ENCODE measurements at regions of chr19 and their contacts with region 1.

Region 1: DNA sequence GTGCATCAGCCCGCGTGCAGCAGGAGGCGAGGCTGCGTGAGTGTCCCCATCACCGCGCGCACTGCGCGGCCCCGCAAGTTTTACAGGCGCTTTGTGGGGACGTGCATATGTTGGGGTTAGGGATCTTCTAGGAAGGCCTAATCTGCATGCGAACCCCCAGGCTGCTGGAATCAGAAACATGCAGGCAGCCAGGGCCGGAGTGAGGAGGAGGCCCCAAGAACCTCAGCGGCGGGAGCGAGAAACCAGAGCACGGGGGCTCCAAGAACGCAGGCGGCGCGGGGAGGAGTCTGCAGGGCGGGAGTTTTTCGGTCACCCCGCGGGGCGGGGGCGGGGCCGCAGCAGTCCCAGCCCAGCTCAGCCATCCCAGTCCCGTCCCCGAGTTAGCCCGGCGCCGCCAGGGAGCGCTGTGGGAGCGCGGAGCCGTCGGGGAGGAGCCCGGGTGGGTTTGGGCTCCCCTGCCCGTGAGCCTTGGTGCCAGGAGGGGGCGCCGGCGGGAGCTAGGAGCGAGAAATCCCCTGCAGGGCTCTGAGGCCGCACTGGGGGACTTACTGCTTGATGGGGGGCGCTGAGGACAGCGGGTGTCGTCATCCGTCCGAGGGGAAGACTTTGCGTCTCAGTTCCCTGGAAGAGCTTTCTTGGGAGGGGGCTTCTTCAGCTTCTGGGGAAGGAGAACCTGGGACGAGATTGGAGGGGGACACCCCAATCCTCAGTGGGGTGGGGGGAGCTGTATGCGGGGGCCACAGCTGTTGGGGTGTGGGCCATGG is 933 bp upstream of the NRTN start:
- DNase-seq: peak; percentile 74 to 97
- H3K4me3 ChIP-seq: no peak overlapping the region
- CTCF ChIP-seq: no peak
- POLR2A ChIP-seq: no peak

Region 2: DNA sequence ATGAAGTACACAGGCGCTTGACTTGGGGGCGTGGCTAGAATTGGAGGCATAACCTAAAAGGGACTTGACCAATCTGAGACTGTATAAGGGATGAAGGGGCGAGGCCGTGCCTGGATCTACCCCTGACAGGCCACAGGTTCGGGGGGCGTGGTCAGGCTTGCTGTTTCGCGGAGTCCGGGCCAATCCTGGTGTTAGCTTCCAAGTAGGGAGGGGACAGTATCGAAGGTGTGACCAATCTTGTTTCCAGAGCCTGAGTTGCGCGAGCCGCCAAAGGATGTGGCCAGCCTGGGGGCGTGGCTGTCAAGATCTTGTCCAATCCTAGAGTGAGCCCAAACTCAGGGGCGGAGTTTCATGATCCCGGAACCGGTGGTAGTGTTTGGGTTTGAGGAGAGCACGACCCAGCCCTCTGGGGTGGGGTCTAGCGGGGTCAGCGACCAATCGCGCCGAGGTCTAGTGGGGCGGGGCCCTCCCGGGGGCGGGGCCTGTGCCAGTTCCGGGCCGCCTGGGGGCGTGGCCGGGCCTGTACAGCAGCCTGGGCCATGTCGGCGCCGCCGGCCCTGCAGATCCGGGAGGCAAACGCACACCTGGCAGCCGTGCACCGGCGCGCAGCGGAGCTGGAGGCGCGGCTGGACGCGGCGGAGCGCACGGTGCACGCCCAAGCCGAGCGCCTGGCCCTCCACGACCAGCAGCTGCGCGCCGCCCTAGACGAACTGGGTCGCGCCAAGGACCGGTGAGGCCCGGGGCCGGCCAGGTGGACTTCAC is 100.6 kb after region 1 on chr19 and contains the start of gene VMAC:
- intact Hi-C with region 1: no loop called
- DNase-seq: peak; percentile 100
- H3K4me3 ChIP-seq: peak within 1 kb of the TSS; percentile 94
- CTCF ChIP-seq: no peak
- POLR2A ChIP-seq: no peak
- total RNA-seq, gene VMAC: 10.2 to 15.2 (median 10.8) TPM

Region 3: DNA sequence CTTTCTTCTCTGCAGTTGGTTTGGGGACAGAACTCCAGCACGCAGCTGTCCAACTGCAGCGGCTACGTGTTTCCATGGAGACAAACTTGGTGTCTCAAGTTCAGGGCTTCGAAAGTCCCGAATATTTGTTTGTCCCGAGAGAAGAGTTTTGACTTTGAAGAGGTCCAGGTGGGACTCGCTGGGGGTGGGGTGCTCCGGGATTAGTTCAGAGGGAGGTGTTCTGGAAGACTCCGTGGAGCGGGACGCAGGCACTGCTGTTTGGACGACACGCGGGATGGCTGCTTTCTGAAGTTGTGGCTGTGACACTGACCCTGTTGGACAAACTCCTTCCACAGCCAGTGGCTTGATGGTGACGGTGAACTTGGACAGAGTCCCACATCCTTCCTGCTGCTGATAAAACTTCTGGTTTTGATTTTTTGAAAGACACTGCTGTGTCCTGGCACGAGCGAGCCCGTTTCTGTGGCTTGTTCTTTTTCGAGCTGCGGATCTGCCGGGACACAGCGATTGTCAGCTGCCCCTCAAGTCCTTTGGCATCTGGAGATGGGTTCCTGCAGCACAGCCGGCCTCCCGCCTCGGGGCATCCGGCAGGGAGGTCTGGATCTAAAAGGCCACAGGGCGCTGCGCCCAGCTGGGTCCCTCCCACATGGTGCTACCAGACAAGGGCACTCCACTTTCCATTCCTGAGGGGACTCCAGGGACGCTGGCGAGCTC is 189.9 kb after region 1 on chr19:
- intact Hi-C with region 1: no loop called
- DNase-seq: peak in 1 of 2 donors; percentile 21
- H3K4me3 ChIP-seq: no peak overlapping the region
- CTCF ChIP-seq: no peak
- POLR2A ChIP-seq: no peak

Region 4: GRCh38 chr19:6021878-6022569 is 218.1 kb after region 1 on chr19:
- intact Hi-C with region 1: loop called (anchors 10 kb)
- DNase-seq: peak; percentile 67 to 91
- H3K4me3 ChIP-seq: no peak overlapping the region
- CTCF ChIP-seq: peak in 1 of 3 donors; percentile 58
- POLR2A ChIP-seq: no peak